ENCODE measurements at regions of chr22 and their contacts with region 1.

Region 1: GRCh38 chr22:24951942-24952836 is at the start of gene KIAA1671:
- DNase-seq: peak; percentile 71 to 84
- ATAC-seq: peak; percentile 88 to 89
- H3K4me3 ChIP-seq: peak within 1 kb of the TSS; percentile 67
- H3K27ac ChIP-seq: peak within 1 kb of the TSS; percentile 89 to 93
- H3K4me1 ChIP-seq: peaks cover 11% of the 10 kb centered on the region
- CTCF ChIP-seq: peak; percentile 86
- EP300 ChIP-seq: no peak
- POLR2A ChIP-seq: peak; percentile 79
- RAD21 ChIP-seq: peak; percentile 86 to 97
- polyA plus RNA-seq, gene KIAA1671: 7.9 and 8.8 TPM in 2 replicates

Region 2: DNA sequence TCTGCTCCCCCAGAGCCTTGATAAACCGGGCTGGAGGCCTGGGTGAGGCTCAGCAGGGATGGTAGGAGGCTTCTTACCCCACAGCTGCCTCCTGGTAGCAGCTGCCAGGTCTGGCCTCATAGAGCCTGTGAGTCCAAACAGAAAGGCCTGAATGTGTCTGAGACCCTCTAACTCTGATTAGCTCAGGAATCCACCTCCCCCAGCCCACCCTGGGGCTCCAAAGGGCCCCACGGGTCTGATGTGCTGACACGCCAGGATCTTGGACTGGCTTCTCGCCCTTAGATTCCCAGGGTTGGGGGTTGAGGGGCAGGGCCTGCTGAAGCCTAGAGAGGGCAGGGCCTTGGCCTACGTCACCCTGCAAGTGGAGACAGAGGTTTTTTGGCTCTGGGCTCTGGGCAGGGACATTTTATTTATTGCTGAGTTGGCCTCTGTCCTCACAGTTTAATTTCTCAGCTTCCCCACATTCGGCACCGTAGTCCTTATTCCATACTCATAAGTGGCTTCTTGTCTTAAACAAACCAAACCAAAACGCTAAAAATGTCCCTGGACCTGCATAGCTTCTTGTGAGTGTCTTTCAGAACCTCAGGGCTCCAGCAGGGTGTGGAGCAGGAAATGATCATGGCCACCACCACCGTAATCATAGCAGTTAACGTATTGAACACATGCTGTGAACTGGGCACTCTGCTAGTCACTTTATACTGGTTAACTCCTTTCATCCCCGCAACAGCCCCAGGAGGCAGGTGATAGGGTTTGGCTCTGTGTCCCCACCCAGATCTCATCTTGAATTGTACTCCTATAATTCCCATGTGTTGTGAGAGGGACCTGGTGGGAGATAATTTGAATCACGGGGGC is 25.4 kb after region 1 on chr22:
- CTCF ChIA-PET with region 1: no interaction called
- POLR2A ChIA-PET with region 1: no interaction called
- DNase-seq: no peak
- ATAC-seq: peak in 1 of 2 experiments; percentile 23; a peak in 1 of 6 replicates
- H3K4me3 ChIP-seq: no peak overlapping the region
- H3K27ac ChIP-seq: peak overlapping the region in 1 of 2 experiments; percentile 58; a peak in 1 of 6 replicates
- H3K4me1 ChIP-seq: peaks cover 29% of the 10 kb centered on the region; the same call in 2 of the 3 replicates
- CTCF ChIP-seq: no peak
- EP300 ChIP-seq: no peak
- POLR2A ChIP-seq: no peak
- RAD21 ChIP-seq: no peak

Region 3: GRCh38 chr22:25027959-25028840 is 76.0 kb after region 1 on chr22:
- CTCF ChIA-PET with region 1: interaction called, 43 read pairs
- POLR2A ChIA-PET with region 1: no interaction called
- DNase-seq: peak; percentile 31 to 59
- ATAC-seq: peak; percentile 85 to 96; a peak in 5 of 6 replicates
- H3K4me3 ChIP-seq: no peak overlapping the region
- H3K27ac ChIP-seq: peak overlapping the region in 1 of 2 experiments; percentile 69; a peak in 2 of 6 replicates
- H3K4me1 ChIP-seq: peaks cover 17% of the 10 kb centered on the region
- CTCF ChIP-seq: peak; percentile 54
- EP300 ChIP-seq: no peak
- POLR2A ChIP-seq: no peak
- RAD21 ChIP-seq: peak; percentile 74 to 80

Region 4: DNA sequence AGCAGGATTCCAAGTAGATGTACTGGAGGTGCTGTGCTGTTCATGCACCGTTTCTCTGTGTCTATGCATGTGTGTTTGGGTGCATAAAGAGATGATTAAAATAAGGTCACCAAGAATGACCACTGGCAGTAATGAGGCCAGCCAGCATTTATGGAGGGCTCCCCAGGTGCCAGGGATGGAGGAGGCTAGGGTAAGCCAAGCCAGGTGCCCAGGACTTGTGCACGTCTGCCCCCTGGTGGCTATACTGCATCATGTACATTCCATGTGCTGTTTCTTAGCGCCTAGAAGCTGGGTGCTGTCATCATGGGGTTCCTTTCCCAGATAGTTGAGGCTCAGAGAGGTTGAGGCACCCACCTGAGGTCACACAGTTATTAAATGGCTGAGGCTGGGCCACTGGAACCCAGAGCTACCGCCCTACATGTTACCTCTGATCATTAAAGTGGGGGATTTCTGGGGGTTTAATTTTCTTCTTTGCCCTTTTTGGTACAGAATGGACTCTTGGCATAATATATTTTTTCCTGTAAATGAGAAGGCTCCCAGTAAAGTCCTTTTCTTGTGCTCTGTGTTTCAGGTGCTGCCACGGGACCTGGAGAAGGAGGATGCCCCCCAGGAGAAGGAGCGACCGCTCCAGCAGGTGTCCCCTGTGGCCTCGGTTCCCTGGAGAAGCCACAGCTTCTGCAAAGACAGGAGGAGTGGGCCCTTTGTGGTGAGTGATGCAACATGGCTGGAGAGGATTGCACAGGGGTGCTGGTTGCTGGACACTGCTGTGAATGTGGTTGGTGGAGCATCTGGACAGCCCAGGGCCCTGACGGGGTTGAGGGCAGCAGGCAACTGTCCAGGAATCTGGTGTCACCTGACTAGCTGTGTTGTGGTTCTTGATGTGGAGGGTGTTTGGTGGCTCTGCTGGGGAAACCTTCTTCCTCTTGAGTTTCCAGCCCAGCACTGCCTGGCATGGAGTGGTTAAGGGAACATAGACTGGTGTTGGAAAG is 96.8 kb after region 1 on chr22:
- CTCF ChIA-PET with region 1: interaction called, 112 read pairs
- POLR2A ChIA-PET with region 1: no interaction called
- DNase-seq: peak; percentile 64
- ATAC-seq: peak; percentile 92 to 96
- H3K4me3 ChIP-seq: no peak overlapping the region
- H3K27ac ChIP-seq: no peak overlapping the region
- H3K4me1 ChIP-seq: peaks cover 4% of the 10 kb centered on the region; the same call in 1 of the 3 replicates
- CTCF ChIP-seq: peak; percentile 75
- EP300 ChIP-seq: no peak
- POLR2A ChIP-seq: no peak
- RAD21 ChIP-seq: peak; percentile 80 to 86

Region 5: DNA sequence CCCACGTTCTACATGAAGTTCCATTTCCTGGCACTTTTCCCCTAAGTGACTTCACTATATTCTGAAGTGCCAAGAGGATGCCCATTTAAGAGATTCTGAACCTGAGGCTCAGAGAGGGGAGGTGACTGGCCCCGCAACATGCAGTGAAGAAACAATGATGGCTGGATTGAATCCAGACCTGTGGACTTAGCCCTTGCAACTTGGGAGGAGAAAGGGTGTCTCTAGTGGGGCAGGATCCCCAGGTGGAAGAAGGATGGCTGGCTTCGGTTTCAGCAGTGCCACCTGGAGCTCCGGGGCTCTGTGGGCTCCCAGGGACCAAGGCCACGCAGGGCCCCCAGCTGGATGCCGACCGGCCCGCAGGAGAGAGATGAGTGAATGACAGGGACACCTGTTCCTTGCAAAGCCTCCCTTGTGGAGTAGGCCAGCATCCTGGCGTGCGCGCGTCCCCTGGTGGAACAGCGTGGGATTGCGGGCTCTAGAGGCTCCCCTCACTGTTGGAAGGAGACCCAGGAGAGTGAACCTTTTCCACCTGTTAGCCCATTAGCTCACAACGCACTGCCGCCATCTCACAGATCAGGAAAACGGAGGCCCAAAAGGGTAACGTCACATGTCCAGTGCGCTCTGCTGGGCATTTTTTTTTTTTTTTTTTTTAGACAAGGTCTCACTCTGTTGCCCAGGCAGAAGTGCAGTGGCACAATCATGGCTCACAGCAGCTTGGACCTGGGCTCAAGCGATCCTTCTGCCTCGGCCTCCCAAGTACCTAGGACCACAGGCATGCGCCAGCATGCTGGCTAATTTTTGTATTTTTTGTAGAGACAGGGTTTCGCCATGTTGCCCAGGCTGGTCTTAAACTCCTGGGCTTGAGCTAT is 105.1 kb after region 1 on chr22:
- CTCF ChIA-PET with region 1: interaction called, 112 read pairs
- POLR2A ChIA-PET with region 1: no interaction called
- DNase-seq: peak; percentile 44 to 56
- ATAC-seq: peak; percentile 96 to 98
- H3K4me3 ChIP-seq: no peak overlapping the region
- H3K27ac ChIP-seq: no peak overlapping the region
- H3K4me1 ChIP-seq: peaks cover 7% of the 10 kb centered on the region; the same call in 1 of the 3 replicates
- CTCF ChIP-seq: peak; percentile 65
- EP300 ChIP-seq: no peak
- POLR2A ChIP-seq: no peak
- RAD21 ChIP-seq: peak; percentile 69 to 77